HCT116 (cell line): ENCODE measurements at regions of chr7 and their contacts with region 1.

Region 1: DNA sequence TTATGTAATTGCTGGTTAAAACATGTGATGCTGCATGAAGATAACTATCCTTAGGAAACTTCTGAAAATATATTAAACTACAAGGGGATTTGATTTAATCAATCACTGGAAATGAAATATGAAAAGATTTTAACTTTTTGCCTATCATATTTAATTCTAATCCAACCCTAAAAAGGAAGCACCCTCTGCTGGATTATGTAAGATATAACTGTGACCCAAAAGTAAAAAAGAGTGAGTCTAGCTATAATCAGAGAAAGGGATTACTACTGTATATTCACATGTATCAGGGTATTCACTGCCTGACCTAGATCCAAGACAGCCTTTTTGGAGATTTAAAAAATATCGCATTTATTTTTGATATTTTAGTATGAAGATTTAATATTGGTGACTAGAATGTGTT is 295.5 kb downstream of the MDFIC start:
- DNase-seq: no peak
- ATAC-seq: no peak
- H3K4me3 ChIP-seq: no peak overlapping the region
- H3K27ac ChIP-seq: no peak overlapping the region
- H3K4me1 ChIP-seq: no peaks in the 10 kb centered on the region
- H3K27me3 ChIP-seq: no peaks in the 10 kb centered on the region
- CTCF ChIP-seq: peak; percentile 4 to 42 (median 28); a peak in 3 of 6 replicates
- POLR2A ChIP-seq: no peak
- RAD21 ChIP-seq: peak; percentile 59

Region 2: DNA sequence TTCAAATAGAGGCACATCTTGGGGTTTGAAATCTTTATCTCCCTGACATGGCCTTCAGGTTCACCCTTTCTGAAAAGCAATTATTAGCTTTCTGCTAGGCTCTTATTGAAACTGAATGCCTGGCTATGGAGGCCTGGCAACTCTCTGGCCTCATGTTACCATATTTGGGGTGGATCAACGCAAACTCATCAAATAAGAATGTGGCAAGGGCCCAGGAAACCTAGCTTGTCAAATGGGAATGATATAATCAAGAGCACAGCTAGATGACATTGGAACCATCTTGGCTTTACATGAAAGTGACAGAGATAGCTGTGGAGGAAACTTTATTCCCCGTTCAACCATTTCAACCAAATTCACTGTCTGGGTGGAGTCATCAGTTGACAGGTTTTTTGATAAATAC is 1896.2 kb before region 1 on chr7:
- CTCF ChIA-PET with region 1: no interaction called
- POLR2A ChIA-PET with region 1: no interaction called
- RAD21 ChIA-PET with region 1: no interaction called
- intact Hi-C with region 1: no loop called
- DNase-seq: no peak
- ATAC-seq: no peak
- H3K4me3 ChIP-seq: no peak overlapping the region
- H3K27ac ChIP-seq: no peak overlapping the region
- H3K4me1 ChIP-seq: peaks cover 0 to 4% of the 10 kb centered on the region in 2 experiments; a peak in 1 of 4 replicates
- H3K27me3 ChIP-seq: no peaks in the 10 kb centered on the region
- CTCF ChIP-seq: no peak
- POLR2A ChIP-seq: no peak
- RAD21 ChIP-seq: no peak

Region 3: DNA sequence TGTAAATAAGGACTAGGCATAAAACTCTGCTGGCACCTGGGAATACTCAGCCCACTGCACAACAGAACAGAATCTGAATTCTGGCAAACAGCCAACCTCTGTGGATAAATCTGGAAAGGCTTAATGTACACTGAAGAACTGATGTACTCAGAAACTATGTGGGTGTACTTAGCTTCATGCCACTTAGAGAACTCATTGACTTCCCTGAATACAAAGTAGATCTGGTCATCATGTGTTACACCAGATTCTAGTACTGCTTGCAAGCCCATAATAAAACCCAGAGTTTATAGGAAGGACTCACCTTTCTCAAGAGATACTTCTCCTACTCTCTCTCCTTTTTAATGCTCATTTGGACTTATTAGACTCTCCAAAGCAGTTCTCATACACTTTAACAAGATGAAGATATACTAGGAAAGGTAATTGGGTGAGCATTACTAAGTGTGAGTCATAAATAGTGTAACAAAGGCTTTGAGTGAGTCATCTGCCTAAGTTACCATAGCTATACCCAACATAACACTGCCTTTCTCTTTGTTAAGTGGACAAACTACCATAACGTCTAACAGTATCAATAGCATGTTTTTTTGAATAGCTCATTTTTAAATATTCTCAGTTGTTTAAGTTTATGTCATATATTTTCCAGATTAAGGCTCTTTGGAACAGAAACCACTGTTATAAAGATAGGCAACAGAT is 13.7 kb after region 1 on chr7:
- CTCF ChIA-PET with region 1: interaction called, 12 read pairs
- POLR2A ChIA-PET with region 1: interaction called, 7 read pairs
- RAD21 ChIA-PET with region 1: no interaction called
- intact Hi-C with region 1: no loop called
- DNase-seq: peak; percentile 91
- ATAC-seq: peak; percentile 91
- H3K4me3 ChIP-seq: peak overlapping the region in 1 of 2 experiments; percentile 17; a peak in 2 of 4 replicates
- H3K27ac ChIP-seq: peak overlapping the region; percentile 48; the same call in 1 of the 2 replicates
- H3K4me1 ChIP-seq: peaks cover 21 to 33% of the 10 kb centered on the region in 2 experiments; a peak in 3 of 4 replicates
- H3K27me3 ChIP-seq: no peaks in the 10 kb centered on the region
- CTCF ChIP-seq: no peak
- POLR2A ChIP-seq: no peak
- RAD21 ChIP-seq: no peak; the same call in 1 of the 2 replicates